Dorsolateral prefrontal cortex (tissue), 120 donors: ENCODE measurements at regions of chr14 and their contacts with region 1.

Region 1: DNA sequence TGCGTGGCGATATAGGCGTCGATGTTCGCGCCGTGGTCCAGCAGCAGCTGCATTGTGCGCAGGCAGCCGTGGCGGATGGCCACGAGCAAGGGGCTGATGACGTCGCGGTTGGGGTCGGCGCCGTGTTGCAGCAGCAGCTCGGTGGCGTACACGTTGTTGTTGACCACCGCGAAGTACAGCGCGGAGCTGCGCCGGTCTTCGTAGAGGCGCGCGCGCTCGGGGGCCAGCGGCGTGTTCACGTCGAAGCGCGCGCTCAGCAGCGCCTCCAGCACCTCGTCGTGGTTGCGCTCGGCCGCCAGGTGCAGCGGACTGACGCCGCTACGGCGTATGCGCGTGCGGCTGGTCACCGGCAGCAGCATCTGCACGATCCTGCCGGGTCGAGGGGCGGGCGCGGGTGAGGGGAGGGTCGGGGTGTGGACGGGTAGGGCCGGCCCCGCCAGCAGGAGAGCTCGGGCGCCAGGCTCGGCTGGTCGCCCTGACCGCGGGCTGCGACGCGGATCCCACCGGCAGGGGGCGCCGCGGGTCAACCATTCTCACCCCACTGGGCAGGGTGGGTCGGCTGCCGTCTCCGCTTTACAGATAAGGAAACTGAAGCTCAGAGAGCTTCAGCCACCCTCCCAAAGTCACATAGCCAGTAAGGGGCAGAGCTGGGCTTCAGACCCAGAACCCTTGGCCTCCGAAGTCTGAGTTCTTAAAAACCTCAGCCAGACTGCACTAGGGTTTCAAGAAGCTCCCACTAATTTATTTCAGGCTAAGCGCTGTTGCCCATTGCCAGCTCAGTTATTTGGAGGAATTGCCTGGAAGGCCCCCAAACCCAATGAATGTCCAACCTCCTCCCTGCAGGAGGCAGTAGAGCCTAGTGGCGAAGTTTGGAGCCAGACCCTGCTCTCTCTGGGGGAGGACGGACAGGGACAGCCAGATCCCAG is 12.4 kb downstream of the FAM181A start:
- DNase-seq: peak; percentile 61 to 87 (median 74)
- H3K4me3 ChIP-seq: peak overlapping the region in 57 of 59 donors; percentile 7 to 61 (median 39)
- H3K27ac ChIP-seq: no peak overlapping the region
- H3K27me3 ChIP-seq: peaks cover 0 to 10% (median 4%) of the 10 kb centered on the region in 45 donors
- CTCF ChIP-seq: peak; percentile 69 to 98 (median 93)

Region 2: DNA sequence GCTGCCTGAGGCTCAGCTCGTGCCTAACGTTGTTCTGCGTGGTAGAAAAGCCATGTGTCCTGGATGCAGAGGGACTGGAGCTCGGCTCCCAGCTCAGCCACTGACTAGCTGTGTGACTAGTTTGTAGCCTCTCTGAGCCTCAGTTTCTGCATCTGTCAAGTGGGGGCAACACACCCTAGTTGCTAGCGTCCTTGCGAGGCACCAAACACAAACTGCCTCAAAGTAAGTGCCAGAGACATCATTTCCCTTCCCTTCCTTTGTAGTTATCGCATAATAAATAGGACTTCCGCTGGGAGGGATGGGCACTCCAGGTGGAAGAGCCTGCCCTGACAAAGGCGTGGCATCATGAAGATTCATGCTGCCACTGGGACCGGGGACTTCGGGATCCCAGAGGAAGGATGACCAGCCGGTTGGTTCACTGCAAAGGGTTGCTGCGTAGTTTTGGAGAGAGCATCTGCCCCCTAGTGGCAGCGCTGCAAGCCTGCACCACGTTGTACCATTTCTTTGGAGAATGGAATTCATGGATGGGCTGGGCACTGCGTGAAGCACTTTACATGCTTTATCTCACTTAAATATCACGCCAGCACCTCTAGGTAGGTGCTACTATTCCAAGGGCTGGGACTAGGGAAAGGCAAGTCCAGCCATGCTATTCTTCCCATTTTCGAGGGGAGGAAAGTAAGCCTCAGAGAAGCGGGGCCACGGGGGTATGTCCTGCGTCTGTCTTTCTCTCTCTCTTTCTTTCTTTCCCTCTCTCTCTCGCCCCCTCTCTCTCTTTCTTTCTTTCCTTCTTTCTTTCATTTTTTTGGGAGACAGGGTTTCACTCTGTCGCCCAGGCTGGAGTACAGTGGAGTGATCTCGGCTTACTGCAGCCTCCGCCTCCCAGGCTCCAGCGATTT is 62.2 kb after region 1 on chr14:
- intact Hi-C with region 1: loop called (anchors 1 kb)
- DNase-seq: peak in 9 of 10 donors; percentile 48 to 80 (median 68)
- H3K4me3 ChIP-seq: peak overlapping the region in 1 of 59 donors; percentile 22
- H3K27ac ChIP-seq: no peak overlapping the region
- H3K27me3 ChIP-seq: peaks cover 0 to 12% (median 0%) of the 10 kb centered on the region in 45 donors
- CTCF ChIP-seq: peak; percentile 93 to 99 (median 97)

Region 3: GRCh38 chr14:94173885-94174603 is 234.5 kb after region 1 on chr14 and contains the start of gene PPP4R4:
- intact Hi-C with region 1: loop called in 1 of 2 experiments (anchors 10 kb)
- DNase-seq: peak; percentile 56 to 87 (median 74)
- H3K4me3 ChIP-seq: peak within 1 kb of the TSS; percentile 62 to 93 (median 80)
- H3K27ac ChIP-seq: peak within 1 kb of the TSS in 51 of 59 donors; percentile 3 to 84 (median 66)
- H3K27me3 ChIP-seq: peaks cover 0 to 7% (median 0%) of the 10 kb centered on the region in 45 donors
- CTCF ChIP-seq: peak in 4 of 56 donors; percentile 2 to 19 (median 16)
- total RNA-seq, gene PPP4R4: 9.9 to 65.6 (median 28.7) TPM